Mucosa of descending colon (tissue), 3 donors: ENCODE measurements at regions of chr15 and their contacts with region 1.

Region 1: GRCh38 chr15:31069360-31070000 is 32.0 kb downstream of the TRPM1 start:
- DNase-seq: no peak
- ATAC-seq: peak; percentile 51
- H3K4me3 ChIP-seq: no peak overlapping the region
- H3K4me1 ChIP-seq: no peaks in the 10 kb centered on the region
- CTCF ChIP-seq: no peak

Region 2: DNA sequence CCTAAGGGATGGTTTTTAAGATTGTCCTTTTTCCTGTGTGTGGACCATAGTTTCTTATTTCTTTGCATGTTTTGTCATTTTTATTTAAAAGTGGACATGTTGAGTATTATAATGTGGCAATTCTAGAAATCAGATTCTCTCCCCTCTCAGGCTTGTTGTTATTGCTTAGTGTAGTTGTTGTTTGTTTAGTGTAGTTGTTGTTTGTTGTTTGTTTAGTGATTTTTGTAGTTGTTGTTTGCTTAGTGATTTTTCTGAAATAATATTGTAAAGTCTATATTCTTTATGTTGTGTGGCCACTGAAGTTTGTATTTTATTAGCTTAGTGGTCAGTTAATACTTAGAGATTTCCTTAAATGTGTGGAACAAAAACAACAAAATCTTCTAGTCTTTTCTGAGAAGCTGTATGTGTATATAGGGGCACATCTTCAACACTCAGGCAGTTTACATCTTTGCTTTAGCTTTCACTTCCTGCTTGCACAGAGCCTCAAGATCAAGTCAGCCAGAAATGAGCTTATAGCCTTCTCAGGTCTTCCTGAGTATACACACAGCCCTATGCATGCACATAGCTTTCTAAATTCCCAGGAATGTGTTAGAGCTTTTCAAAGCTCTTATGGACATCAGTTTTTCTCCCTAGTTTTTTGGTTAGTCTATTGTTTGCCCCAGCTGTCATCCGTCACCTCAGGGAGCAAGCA is 55.8 kb before region 1 on chr15:
- intact Hi-C with region 1: loop called in 1 of 2 experiments (anchors 10 kb)
- DNase-seq: no peak
- ATAC-seq: peak; percentile 79
- H3K4me3 ChIP-seq: no peak overlapping the region
- H3K4me1 ChIP-seq: no peaks in the 10 kb centered on the region
- CTCF ChIP-seq: no peak